CD4-positive, alpha-beta T cell (primary cell): ENCODE measurements at regions of chr12 and their contacts with region 1.

Region 1: DNA sequence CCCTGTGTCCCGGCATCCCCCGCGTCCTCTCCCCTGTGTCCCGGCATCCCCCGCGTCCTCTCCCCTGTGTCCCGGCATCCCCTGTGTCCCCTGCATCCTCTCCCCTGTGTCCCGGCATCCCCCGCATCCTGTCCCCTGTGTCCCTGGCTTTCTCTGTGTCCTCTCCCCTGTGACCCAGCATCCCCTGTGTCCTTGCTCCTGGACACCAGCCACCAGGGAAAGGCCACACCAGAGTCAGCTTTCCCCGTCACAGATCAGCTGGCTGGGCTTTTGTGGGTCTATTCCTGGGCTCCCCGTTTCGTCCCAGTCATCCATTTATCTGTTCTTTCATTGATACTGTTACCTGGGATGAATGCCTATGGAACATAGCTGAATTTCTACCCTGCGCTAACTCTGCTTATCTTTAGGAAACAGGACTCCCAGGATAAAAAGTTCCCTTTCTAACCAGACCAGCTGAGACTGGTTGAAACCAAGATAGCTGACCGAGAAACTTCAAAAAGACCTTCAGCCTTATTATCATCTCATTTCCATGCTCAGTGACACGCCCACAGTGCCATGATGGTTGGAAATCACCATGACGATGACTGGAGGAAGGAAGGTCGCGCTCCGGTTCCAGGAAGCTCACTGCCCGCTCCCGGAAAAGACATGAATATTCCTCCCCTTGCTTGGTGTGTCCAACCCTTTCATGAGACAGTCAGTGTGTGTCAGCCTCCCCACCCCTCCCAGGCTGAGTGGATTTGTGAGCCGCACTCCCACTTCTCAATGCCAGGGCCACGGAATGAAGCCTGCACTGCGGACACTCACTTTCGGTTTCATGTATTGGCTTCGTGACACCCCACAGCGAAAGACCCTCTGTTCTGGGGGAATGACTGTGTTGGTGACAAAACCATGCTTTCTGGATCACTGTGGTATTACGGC is 276.4 kb upstream of the SFSWAP start:
- DNase-seq: no peak
- ATAC-seq: no peak
- H3K4me3 ChIP-seq: no peak overlapping the region
- H3K4me3 Mint-ChIP-seq: no peak overlapping the region
- H3K27ac ChIP-seq: no peak overlapping the region
- H3K27ac Mint-ChIP-seq: no peak overlapping the region
- H3K4me1 ChIP-seq: no peaks in the 10 kb centered on the region
- H3K4me1 Mint-ChIP-seq: no peaks in the 10 kb centered on the region
- H3K27me3 ChIP-seq: peaks cover 4 to 26% of the 10 kb centered on the region in 2 experiments
- H3K27me3 Mint-ChIP-seq: peaks cover 41% of the 10 kb centered on the region
- CTCF ChIP-seq: no peak

Region 2: GRCh38 chr12:131229426-131230339 is 204.8 kb before region 1 on chr12:
- CTCF ChIA-PET with region 1: no interaction called
- POLR2A ChIA-PET with region 1: no interaction called
- intact Hi-C with region 1: loop called in 1 of 2 experiments (anchors 5 kb)
- DNase-seq: no peak
- ATAC-seq: no peak
- H3K4me3 ChIP-seq: no peak overlapping the region
- H3K4me3 Mint-ChIP-seq: no peak overlapping the region
- H3K27ac ChIP-seq: no peak overlapping the region
- H3K27ac Mint-ChIP-seq: no peak overlapping the region
- H3K4me1 ChIP-seq: no peaks in the 10 kb centered on the region
- H3K4me1 Mint-ChIP-seq: peaks cover 5% of the 10 kb centered on the region
- H3K27me3 ChIP-seq: peaks cover 0 to 5% of the 10 kb centered on the region in 2 experiments
- H3K27me3 Mint-ChIP-seq: peaks cover 9% of the 10 kb centered on the region
- CTCF ChIP-seq: no peak